Naive thymus-derived CD8-positive, alpha-beta T cell (primary cell): ENCODE measurements at regions of chr9 and their contacts with region 1.

Region 1: DNA sequence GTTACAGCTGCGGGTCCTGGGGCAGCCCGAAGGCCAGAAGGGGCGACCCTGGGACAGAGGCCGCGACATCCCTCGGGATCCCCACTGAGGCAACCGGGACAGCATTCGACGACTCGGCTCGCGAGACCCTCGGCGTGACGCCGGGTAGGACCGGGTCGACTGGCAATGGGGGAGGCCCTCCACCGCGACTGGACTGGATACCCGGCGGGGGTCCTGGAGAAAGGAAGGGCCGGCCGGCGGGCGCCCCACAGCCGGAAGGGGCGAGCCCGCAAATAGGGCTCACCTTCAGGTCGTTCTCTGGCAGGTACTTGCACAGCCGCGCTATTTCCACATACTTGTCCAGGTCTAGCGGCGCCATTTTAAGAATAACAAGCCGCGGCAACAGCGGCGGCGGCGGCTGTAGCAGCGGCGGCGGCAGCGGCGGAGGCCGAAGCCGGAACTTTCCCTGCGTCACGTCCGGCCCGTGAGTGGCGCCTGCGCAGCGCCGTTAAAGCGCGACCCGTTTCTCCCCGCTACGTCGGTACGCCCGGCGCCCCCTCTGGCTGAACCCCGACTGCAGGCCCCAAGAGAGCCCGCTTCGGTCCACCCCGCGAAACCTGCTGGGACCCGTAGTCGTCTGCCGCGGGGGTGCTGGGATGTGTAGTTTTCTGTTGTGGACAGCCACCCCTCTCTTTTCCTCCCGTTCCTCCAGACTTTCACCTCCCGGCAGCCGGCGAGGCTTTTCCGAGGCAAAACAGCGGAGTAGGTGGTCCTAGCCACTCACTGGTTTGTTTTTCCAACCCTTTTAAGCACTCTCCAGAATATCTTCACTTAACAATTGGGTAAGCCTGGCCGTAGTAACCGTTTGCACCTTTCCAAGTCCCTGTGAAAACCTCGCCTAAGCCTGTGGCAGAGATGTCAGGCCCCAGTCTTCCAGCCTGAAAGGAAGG is at the start of gene PPP6C:
- DNase-seq: peak; percentile 93 to 98 (median 96)
- ATAC-seq: peak; percentile 92
- H3K4me3 Mint-ChIP-seq: peak within 1 kb of the TSS; percentile 92 to 98 (median 96)
- H3K27ac Mint-ChIP-seq: peak within 1 kb of the TSS; percentile 89 to 97 (median 96)
- H3K4me1 Mint-ChIP-seq: peaks cover 20 to 79% (median 66%) of the 10 kb centered on the region in 4 donors
- H3K27me3 Mint-ChIP-seq: no peaks in the 10 kb centered on the region
- polyA plus RNA-seq, gene PPP6C: 47.2 to 55.9 (median 51.6) TPM

Region 2: GRCh38 chr9:125119643-125120286 is 69.9 kb before region 1 on chr9:
- POLR2A ChIA-PET with region 1: no interaction called
- DNase-seq: peak in 5 of 10 donors; percentile 7 to 49 (median 32)
- ATAC-seq: peak; percentile 81 to 93
- H3K4me3 Mint-ChIP-seq: peak overlapping the region in 4 of 10 donors; percentile 2 to 18 (median 10)
- H3K27ac Mint-ChIP-seq: peak overlapping the region in 7 of 10 donors; percentile 5 to 75 (median 43)
- H3K4me1 Mint-ChIP-seq: peaks cover 9 to 40% (median 30%) of the 10 kb centered on the region in 4 donors
- H3K27me3 Mint-ChIP-seq: no peaks in the 10 kb centered on the region

Region 3: GRCh38 chr9:125143375-125144090 is 46.1 kb before region 1 on chr9 and contains the start of gene SCAI:
- POLR2A ChIA-PET with region 1: interaction called, 11 read pairs
- DNase-seq: peak; percentile 93 to 99 (median 98)
- ATAC-seq: peak; percentile 98 to 99
- H3K4me3 Mint-ChIP-seq: peak within 1 kb of the TSS; percentile 85 to 100 (median 96)
- H3K27ac Mint-ChIP-seq: peak within 1 kb of the TSS; percentile 61 to 93 (median 90)
- H3K4me1 Mint-ChIP-seq: peaks cover 16 to 39% (median 32%) of the 10 kb centered on the region in 4 donors
- H3K27me3 Mint-ChIP-seq: no peaks in the 10 kb centered on the region
- polyA plus RNA-seq, gene SCAI: 1.1 to 3.9 (median 3.7) TPM

Region 4: DNA sequence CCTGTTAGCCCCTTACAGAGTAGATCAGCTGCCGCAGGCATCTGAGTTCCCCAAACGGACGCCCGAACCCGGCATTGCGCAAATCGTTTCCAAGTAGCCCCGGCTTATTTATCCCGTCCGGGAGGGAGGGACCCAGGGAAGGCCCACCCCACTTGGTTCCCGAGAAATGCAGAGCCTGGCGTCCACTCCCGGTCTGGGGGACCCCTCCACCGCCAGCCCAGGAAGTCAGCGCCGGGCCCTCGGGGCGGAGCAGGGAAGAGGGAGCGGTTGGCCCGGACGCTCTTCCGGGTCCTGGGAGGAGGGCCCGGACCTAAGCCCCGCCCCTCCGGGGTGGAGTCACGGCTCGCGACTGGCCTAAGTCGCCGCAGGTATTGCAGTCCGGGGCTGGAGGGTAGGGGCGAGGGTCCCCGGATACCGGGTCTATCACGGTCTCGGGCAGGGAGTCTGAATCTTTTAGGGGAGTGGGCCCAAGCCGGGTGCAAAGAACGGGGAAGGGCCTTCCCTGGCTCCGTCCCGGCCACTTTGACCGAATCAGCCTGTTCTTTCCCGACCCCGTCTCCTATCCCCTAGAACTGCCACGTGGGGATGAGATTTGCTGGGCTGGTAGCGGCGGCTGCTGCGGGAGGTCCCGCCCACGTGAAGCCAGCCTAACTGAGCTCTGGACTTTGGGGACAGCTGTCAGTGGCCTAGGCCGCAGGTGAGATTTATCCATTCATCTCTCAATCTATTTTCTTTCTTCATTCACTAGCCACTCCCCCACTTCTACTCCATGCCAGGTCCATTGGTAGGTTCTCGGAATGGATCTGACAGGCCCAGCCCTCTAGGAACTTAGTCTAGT is 10.8 kb after region 1 on chr9 and contains the start of gene RABEPK:
- POLR2A ChIA-PET with region 1: interaction called, 64 read pairs
- DNase-seq: peak; percentile 69 to 91 (median 86)
- ATAC-seq: peak; percentile 93 to 95
- H3K4me3 Mint-ChIP-seq: peak within 1 kb of the TSS; percentile 88 to 97 (median 93)
- H3K27ac Mint-ChIP-seq: peak within 1 kb of the TSS; percentile 86 to 97 (median 94)
- H3K4me1 Mint-ChIP-seq: peaks cover 26 to 62% (median 50%) of the 10 kb centered on the region in 4 donors
- H3K27me3 Mint-ChIP-seq: no peaks in the 10 kb centered on the region
- polyA plus RNA-seq, gene RABEPK: 29.4 to 44.2 (median 32.7) TPM

Region 5: GRCh38 chr9:125272697-125273096 is 83.1 kb after region 1 on chr9:
- POLR2A ChIA-PET with region 1: no interaction called
- DNase-seq: no peak
- ATAC-seq: no peak
- H3K4me3 Mint-ChIP-seq: peak overlapping the region in 1 of 10 donors; percentile 7
- H3K27ac Mint-ChIP-seq: peak overlapping the region in 3 of 10 donors; percentile 12 to 74 (median 62)
- H3K4me1 Mint-ChIP-seq: peaks cover 16 to 56% (median 36%) of the 10 kb centered on the region in 4 donors
- H3K27me3 Mint-ChIP-seq: no peaks in the 10 kb centered on the region

Region 6: DNA sequence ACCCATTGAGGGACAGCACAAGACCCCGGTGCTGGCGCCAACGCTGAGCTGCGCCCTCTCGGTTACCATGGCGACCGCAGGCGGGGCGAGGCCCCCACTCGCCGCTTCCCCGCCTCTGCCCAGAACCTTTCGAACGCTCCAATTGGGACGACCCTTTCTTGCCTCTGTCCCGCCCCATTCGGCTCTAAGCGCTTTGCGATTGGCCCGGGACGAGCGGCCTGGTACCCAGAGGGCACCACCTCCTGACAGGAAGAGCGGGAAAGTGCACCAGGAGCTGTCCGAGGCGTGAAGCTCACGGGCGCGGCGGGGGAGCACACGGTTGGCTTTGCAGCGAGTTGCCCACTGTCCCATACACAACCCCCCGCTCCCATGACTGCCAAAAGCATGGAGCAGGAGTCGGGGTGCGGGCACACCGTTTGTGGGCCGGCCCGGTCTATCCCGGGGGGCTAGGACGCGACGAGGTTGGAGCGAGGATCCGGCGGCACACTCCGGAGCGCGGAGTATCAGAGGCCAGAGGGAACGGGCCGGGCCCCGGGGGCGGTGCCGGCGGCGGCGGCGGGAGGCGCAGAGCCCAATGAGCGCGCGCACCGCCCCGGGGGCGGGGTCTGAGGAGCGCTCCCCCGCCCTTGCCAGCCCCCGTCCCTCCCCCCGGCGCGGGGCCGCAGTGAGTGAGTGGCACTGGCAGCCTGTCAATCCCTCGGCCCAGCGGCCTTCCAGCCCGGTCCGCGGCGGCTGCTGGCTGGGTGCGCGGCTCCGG is 556.6 kb after region 1 on chr9:
- POLR2A ChIA-PET with region 1: no interaction called
- DNase-seq: peak; percentile 88 to 95 (median 90)
- ATAC-seq: peak; percentile 83 to 87
- H3K4me3 Mint-ChIP-seq: peak overlapping the region; percentile 93 to 99 (median 96)
- H3K27ac Mint-ChIP-seq: peak overlapping the region; percentile 82 to 97 (median 93)
- H3K4me1 Mint-ChIP-seq: peaks cover 13 to 37% (median 20%) of the 10 kb centered on the region in 4 donors
- H3K27me3 Mint-ChIP-seq: no peaks in the 10 kb centered on the region